ENCODE measurements at regions of chr11 and their contacts with region 1.

Region 1: GRCh38 chr11:32893343-32894148 is 935 bp downstream of the QSER1 start:
- DNase-seq: peak; percentile 63
- H3K4me3 Mint-ChIP-seq: peak overlapping the region; percentile 97
- H3K27ac Mint-ChIP-seq: peak overlapping the region; percentile 96
- H3K4me1 Mint-ChIP-seq: peaks cover 42% of the 10 kb centered on the region
- H3K27me3 Mint-ChIP-seq: no peaks in the 10 kb centered on the region

Region 2: GRCh38 chr11:31810779-31811647 is 1082.5 kb before region 1 on chr11 and contains the start of gene PAX6:
- CTCF ChIA-PET with region 1: no interaction called
- intact Hi-C with region 1: loop called (anchors 10 kb)
- DNase-seq: peak; percentile 82
- H3K4me3 Mint-ChIP-seq: peak within 1 kb of the TSS; percentile 73
- H3K27ac Mint-ChIP-seq: no peak within 1 kb of the TSS
- H3K4me1 Mint-ChIP-seq: peaks cover 47% of the 10 kb centered on the region
- H3K27me3 Mint-ChIP-seq: peaks cover 76% of the 10 kb centered on the region
- total RNA-seq, gene PAX6: 1.5 TPM

Region 3: GRCh38 chr11:32809313-32809712 is 84.2 kb before region 1 on chr11:
- CTCF ChIA-PET with region 1: interaction called, 3 read pairs
- intact Hi-C with region 1: loop called (anchors 1 kb)
- DNase-seq: peak; percentile 87
- H3K4me3 Mint-ChIP-seq: no peak overlapping the region
- H3K27ac Mint-ChIP-seq: no peak overlapping the region
- H3K4me1 Mint-ChIP-seq: no peaks in the 10 kb centered on the region
- H3K27me3 Mint-ChIP-seq: no peaks in the 10 kb centered on the region

Region 4: DNA sequence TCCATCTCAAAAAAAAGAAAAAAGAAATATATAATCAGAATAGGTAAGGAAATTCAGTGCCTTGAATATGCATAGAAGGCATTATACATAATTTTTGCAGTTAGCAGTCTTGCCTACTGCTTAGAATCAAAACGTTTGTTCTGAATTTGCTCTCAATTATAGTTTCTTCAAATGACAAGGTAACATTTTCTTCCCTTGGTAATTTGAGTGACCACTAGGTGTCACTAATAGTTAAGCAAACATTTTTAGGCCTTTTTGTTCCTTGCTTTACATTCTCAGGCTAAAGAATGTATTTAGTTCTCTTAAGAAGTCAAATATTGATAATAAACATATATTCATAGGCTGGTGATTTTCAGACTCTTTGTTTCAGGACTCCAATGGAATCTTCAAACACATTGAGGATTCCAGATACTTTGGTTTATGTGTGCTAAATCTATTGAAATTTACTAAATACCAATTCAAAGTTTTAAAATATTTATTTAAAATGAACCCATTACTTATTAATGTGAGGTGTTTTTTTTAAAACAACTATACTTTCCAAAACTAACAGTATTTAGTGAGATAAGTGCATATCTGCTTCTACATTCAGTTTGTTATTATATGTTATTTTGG is 67.1 kb after region 1 on chr11:
- CTCF ChIA-PET with region 1: no interaction called
- intact Hi-C with region 1: loop called (anchors 2 kb)
- DNase-seq: no peak
- H3K4me3 Mint-ChIP-seq: no peak overlapping the region
- H3K27ac Mint-ChIP-seq: no peak overlapping the region
- H3K4me1 Mint-ChIP-seq: peaks cover 8% of the 10 kb centered on the region
- H3K27me3 Mint-ChIP-seq: no peaks in the 10 kb centered on the region

Region 5: DNA sequence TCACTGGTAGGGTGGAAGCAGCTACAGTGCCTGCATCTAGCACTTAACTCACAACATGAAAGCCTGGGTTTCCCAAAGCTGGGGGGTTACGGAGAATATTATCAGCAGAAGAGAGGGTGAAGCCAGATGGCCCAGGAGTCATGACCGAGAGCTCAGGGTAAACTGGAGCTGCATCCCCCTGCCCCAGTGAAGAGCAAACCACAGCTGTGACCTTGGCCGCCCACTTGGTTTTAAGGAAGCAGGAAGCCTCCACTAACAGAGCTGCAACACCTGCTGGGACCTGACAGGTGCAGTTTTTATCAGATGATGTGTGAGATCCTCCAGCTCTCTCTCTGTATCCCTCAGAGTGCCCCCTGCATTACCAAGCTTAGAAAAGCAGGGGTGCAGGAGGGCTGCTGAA is 166.7 kb after region 1 on chr11:
- CTCF ChIA-PET with region 1: interaction called, 12 read pairs
- intact Hi-C with region 1: loop called (anchors 1 kb)
- DNase-seq: no peak
- H3K4me3 Mint-ChIP-seq: no peak overlapping the region
- H3K27ac Mint-ChIP-seq: no peak overlapping the region
- H3K4me1 Mint-ChIP-seq: peaks cover 41% of the 10 kb centered on the region
- H3K27me3 Mint-ChIP-seq: peaks cover 1% of the 10 kb centered on the region

Region 6: DNA sequence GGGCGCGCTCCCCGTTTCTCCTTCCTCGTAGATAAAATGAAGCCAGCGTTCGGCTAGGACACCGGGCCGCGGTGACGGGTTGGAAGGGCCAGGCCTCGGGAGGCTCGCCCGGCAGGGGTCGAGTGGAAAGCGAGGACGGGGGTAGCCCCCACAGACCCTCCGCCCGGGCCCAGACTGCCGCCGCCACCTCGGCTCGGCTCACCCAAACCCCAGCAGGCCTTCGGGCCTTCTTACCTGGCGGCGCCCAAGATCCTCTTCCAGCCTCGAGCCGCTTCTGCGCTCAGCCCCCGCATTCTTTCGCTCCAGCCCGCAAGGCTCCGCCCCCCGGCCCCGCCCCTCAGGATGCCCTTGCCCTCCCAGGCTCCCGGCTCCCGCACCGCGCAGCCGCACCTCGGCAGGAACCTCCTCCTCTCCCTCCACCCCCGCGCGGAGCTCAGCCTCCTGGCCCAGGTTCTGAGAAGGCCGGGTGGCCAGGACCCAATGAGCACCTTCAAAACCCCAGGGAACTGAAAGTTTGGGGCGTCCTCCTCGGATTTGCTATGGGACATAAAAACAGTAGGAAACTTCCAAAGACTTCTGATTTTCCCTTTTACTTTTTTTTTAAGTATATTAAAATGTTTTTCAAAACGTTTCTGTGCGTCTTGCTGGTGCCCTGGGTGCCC is 842.7 kb after region 1 on chr11 and contains the start of gene CD59:
- CTCF ChIA-PET with region 1: no interaction called
- intact Hi-C with region 1: loop called (anchors 2 kb)
- DNase-seq: peak; percentile 95
- H3K4me3 Mint-ChIP-seq: peak within 1 kb of the TSS; percentile 78
- H3K27ac Mint-ChIP-seq: peak within 1 kb of the TSS; percentile 61
- H3K4me1 Mint-ChIP-seq: peaks cover 33% of the 10 kb centered on the region
- H3K27me3 Mint-ChIP-seq: no peaks in the 10 kb centered on the region
- total RNA-seq, gene CD59: 59.9 to 61.9 TPM